GM12878 (cell line): ENCODE measurements at regions of chr3 and their contacts with region 1.

Region 1: GRCh38 chr3:13229273-13229949 is 156.2 kb upstream of the IQSEC1 start:
- DNase-seq: peak; percentile 2
- ATAC-seq: peak; percentile 93
- H3K4me3 ChIP-seq: no peak overlapping the region
- H3K27ac ChIP-seq: no peak overlapping the region
- H3K4me1 ChIP-seq: no peaks in the 10 kb centered on the region; the same call in 1 of the 2 replicates
- H3K27me3 ChIP-seq: no peaks in the 10 kb centered on the region
- CTCF ChIP-seq: peak; percentile 53 to 60 (median 59)
- EP300 ChIP-seq: no peak
- POLR2A ChIP-seq: no peak
- RAD21 ChIP-seq: peak; percentile 42; the same call in 1 of the 2 replicates

Region 2: GRCh38 chr3:13301286-13301987 is 72.0 kb after region 1 on chr3:
- CTCF ChIA-PET with region 1: interaction called, 15 read pairs
- POLR2A ChIA-PET with region 1: no interaction called
- RAD21 ChIA-PET with region 1: interaction called, 7 read pairs
- SMC1A ChIA-PET with region 1: interaction called, 8 read pairs
- in situ Hi-C with region 1: no loop called
- intact Hi-C with region 1: no loop called
- DNase-seq: peak; percentile 28
- ATAC-seq: peak; percentile 86
- H3K4me3 ChIP-seq: no peak overlapping the region
- H3K27ac ChIP-seq: no peak overlapping the region
- H3K4me1 ChIP-seq: peaks cover 4% of the 10 kb centered on the region
- H3K27me3 ChIP-seq: no peaks in the 10 kb centered on the region
- CTCF ChIP-seq: no peak
- EP300 ChIP-seq: no peak
- POLR2A ChIP-seq: no peak
- RAD21 ChIP-seq: no peak

Region 3: DNA sequence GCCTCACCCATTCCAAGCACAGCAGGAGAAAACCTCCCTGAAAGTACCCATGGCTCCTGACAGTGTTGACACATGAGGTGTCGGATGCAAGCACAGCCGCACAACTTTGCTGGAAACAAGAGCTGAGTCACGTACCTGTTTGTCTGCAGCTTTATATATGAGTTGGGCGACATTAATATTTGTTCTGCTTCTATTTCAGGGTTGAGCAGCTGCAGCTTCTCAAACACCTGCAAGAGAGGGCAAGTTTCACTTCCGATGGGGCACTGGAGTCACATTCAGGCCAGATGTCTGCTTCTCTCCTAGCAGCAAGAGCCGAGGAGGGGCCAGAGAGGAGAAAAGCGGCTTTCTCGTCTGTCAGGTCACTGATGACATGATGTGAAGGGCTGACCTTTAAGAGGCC is 102.7 kb after region 1 on chr3:
- CTCF ChIA-PET with region 1: interaction called, 18 read pairs
- POLR2A ChIA-PET with region 1: no interaction called
- RAD21 ChIA-PET with region 1: interaction called, 8 read pairs
- SMC1A ChIA-PET with region 1: interaction called, 12 read pairs
- in situ Hi-C with region 1: no loop called
- intact Hi-C with region 1: no loop called
- DNase-seq: peak; percentile 93
- ATAC-seq: peak; percentile 93
- H3K4me3 ChIP-seq: peak overlapping the region; percentile 43; the same call in 1 of the 2 replicates
- H3K27ac ChIP-seq: peak overlapping the region; percentile 88
- H3K4me1 ChIP-seq: peaks cover 38% of the 10 kb centered on the region
- H3K27me3 ChIP-seq: no peaks in the 10 kb centered on the region
- CTCF ChIP-seq: no peak
- EP300 ChIP-seq: peak; percentile 58 to 93
- POLR2A ChIP-seq: peak; percentile 54
- RAD21 ChIP-seq: no peak

Region 4: GRCh38 chr3:13461169-13462158 is 232.1 kb after region 1 on chr3:
- CTCF ChIA-PET with region 1: interaction called, 11 read pairs
- POLR2A ChIA-PET with region 1: no interaction called
- RAD21 ChIA-PET with region 1: interaction called, 6 read pairs
- SMC1A ChIA-PET with region 1: interaction called, 5 read pairs
- in situ Hi-C with region 1: no loop called
- intact Hi-C with region 1: loop called (anchors 10 kb)
- DNase-seq: no peak
- ATAC-seq: peak; percentile 98
- H3K4me3 ChIP-seq: no peak overlapping the region
- H3K27ac ChIP-seq: no peak overlapping the region
- H3K4me1 ChIP-seq: no peaks in the 10 kb centered on the region
- H3K27me3 ChIP-seq: no peaks in the 10 kb centered on the region; a peak in 4 of 4 replicates
- CTCF ChIP-seq: peak; percentile 60 to 87 (median 75)
- EP300 ChIP-seq: no peak
- POLR2A ChIP-seq: no peak
- RAD21 ChIP-seq: peak; percentile 54

Region 5: DNA sequence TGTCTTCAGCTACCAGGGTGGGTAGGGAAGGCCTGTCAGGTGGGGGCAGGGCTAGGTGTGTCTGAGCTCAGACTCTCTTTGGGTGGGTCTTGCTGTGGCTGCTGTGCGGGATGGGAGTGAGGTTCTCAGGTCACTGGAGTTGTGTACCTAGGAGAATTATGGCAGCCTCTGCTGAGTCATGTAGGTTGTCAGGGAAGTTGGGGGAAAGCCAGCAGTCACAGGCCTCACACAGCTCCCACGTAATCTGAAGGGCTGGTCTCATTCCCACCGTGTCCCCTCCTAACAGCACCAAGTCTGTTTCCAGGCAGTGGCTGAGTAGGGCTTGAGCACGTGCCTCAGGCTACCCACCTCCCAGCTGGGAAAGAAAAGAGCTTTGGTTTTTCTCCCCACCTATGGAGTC is 828.3 kb after region 1 on chr3:
- CTCF ChIA-PET with region 1: no interaction called
- POLR2A ChIA-PET with region 1: no interaction called
- RAD21 ChIA-PET with region 1: no interaction called
- SMC1A ChIA-PET with region 1: no interaction called
- in situ Hi-C with region 1: no loop called
- intact Hi-C with region 1: no loop called
- DNase-seq: no peak
- ATAC-seq: no peak
- H3K4me3 ChIP-seq: no peak overlapping the region
- H3K27ac ChIP-seq: no peak overlapping the region
- H3K4me1 ChIP-seq: no peaks in the 10 kb centered on the region
- H3K27me3 ChIP-seq: no peaks in the 10 kb centered on the region
- CTCF ChIP-seq: no peak
- EP300 ChIP-seq: no peak
- POLR2A ChIP-seq: no peak
- RAD21 ChIP-seq: no peak